Thyroid gland (tissue), 4 donors: ENCODE measurements at regions of chr4 and their contacts with region 1.

Region 1: DNA sequence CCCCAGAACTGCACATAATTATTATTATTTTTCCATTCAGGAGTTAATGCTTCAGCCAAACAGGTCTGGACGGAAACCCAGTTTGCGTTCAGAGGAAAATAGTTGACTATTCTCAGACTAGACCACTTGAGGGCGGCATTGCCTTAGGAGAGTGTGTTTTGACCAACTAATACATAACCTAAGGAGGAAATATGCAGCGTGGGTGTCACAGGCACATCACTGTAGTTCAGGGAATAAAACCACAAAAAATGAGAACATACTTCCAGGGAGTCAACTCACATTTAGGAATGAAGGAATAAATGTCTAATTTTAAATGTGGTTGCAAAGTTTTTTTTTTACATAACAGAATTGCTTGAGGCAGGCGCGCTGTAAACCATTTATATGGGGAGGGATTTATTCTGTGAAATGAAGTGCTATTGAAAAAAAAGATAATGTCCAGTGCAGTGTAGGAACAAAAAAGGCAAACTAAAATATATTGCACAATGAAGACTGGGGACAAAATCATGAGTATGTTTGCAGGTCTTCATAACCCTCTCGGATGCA is 93.3 kb downstream of the SYNPO2 start:
- DNase-seq: peak; percentile 60 to 74
- H3K4me3 ChIP-seq: no peak overlapping the region
- H3K27ac ChIP-seq: peak overlapping the region in 2 of 3 donors; percentile 30 to 69
- H3K4me1 ChIP-seq: peaks cover 18 to 20% of the 10 kb centered on the region in 2 donors
- H3K27me3 ChIP-seq: no peaks in the 10 kb centered on the region
- CTCF ChIP-seq: peak in 5 of 6 experiments; percentile 24 to 87 (median 86)
- POLR2A ChIP-seq: no peak

Region 2: GRCh38 chr4:119046263-119046662 is 64.4 kb after region 1 on chr4:
- intact Hi-C with region 1: no loop called
- DNase-seq: peak; percentile 28 to 64
- H3K4me3 ChIP-seq: no peak overlapping the region
- H3K27ac ChIP-seq: no peak overlapping the region
- H3K4me1 ChIP-seq: peaks cover 0 to 10% of the 10 kb centered on the region in 2 donors
- H3K27me3 ChIP-seq: no peaks in the 10 kb centered on the region
- CTCF ChIP-seq: no peak
- POLR2A ChIP-seq: no peak

Region 3: GRCh38 chr4:119299741-119300100 is 317.8 kb after region 1 on chr4:
- intact Hi-C with region 1: loop called (anchors 10 kb)
- DNase-seq: no peak
- H3K4me3 ChIP-seq: peak overlapping the region; percentile 51 to 97 (median 63)
- H3K27ac ChIP-seq: peak overlapping the region; percentile 83 to 98 (median 90)
- H3K4me1 ChIP-seq: peaks cover 13 to 20% of the 10 kb centered on the region in 2 donors
- H3K27me3 ChIP-seq: no peaks in the 10 kb centered on the region
- CTCF ChIP-seq: no peak
- POLR2A ChIP-seq: no peak